ENCODE measurements at regions of chr12 and their contacts with region 1.

Region 1: DNA sequence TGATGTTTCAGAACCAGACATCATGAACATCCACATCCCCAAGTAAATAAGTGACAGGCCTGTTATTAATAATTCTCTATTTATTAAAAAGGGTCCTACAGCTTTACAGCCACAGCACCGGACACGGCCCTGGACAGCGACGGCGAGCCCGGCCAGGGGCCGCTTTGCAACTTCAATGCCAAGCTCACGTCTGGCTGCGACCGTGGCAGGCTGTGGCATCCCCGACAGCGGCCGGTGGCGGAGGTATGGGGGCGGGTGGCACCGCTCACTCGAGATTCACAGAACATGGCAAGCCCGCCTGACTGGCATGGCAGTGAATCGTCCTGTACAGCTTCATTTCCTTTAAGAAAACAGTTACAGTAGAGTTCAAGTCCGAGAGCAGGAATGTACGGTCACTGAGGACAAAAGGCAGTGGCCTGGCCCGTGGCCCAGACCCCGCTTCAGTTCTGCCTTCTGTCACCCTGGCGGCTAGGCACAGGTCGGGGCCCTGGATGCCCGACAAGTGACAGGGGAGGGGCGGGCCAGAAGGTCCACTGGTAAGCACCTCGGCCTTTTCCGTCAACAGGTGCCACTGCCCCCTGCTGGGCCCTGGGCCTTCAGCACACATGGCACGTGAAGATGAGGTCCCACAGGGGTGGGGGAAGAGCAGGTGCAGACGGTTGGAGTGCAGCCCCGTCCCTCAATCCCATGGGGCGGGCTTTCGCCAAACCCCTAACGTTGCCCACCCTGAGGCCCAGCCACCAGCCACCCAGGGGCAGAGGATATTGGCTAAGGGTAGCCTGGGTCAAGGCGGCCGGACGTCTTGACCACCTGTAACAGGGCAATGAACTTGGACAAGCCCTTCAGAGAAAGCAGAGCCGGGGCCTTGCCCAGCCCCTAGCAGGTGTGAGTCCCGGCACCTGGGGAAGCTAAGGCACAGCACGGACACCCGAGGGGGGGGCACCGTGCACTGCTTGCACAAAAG is 30.3 kb downstream of the HIP1R start:
- DNase-seq: no peak
- H3K4me3 ChIP-seq: no peak overlapping the region
- H3K27ac ChIP-seq: no peak overlapping the region
- H3K4me1 ChIP-seq: no peaks in the 10 kb centered on the region
- H3K27me3 ChIP-seq: peaks cover 16 to 34% (median 29%) of the 10 kb centered on the region in 4 experiments
- CTCF ChIP-seq: peak; percentile 17 to 42 (median 42); a peak in 3 of 4 replicates
- EP300 ChIP-seq: no peak
- POLR2A ChIP-seq: no peak
- RAD21 ChIP-seq: peak; percentile 9 to 11; a peak in 2 of 4 replicates

Region 2: DNA sequence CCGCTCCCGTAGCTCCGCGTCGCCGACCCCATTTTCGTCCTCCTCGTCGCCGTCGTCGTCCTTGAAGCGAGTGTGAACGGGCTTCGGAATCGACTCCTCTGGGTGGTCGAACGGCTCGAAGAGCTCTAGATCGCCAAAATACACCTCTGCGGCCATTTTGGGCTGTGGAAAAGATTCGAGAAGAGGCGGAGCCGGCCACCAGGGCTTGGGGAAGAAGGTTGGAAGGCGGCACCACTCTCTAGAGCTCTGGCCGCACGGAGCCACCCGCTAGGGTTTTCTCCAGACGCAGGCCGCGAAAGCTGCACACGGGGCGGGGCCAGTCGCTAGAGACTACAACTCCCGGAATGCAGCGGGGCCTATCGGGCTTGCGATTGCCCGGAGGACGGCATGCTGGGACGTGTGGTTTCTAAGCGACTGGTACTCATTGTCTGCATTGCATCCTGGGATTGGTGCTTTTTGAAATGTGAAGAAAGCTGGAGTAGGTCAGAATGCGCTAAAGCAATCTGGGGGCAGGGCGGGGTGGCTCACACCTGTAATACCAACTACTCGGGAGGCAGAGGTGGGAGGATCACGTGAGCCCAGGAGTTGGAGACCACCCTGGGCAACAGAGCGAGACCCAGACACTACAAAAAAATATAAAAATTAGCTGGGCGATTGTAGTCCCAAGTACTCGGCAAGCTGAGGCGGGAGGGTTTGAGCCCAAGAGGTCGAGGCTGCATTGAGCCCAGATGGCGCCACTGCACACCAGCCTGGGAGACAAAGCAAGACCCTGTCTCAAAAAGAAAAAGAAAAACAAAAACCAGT is 364.7 kb before region 1 on chr12 and contains the start of gene ZCCHC8:
- CTCF ChIA-PET with region 1: no interaction called
- POLR2A ChIA-PET with region 1: no interaction called
- DNase-seq: peak; percentile 94 to 95
- H3K4me3 ChIP-seq: peak within 1 kb of the TSS; percentile 77 to 96 (median 94)
- H3K27ac ChIP-seq: peak within 1 kb of the TSS; percentile 90
- H3K4me1 ChIP-seq: peaks cover 0 to 3% (median 0%) of the 10 kb centered on the region in 4 experiments; a peak in 1 of 7 replicates
- H3K27me3 ChIP-seq: no peaks in the 10 kb centered on the region
- CTCF ChIP-seq: peak; percentile 5 to 24 (median 19); a peak in 2 of 4 replicates
- EP300 ChIP-seq: peak in 1 of 2 experiments; percentile 4; a peak in 1 of 3 replicates
- POLR2A ChIP-seq: peak; percentile 81 to 85
- RAD21 ChIP-seq: no peak
- total RNA-seq, gene ZCCHC8: 27.4 and 28.9 TPM in 2 replicates

Region 3: DNA sequence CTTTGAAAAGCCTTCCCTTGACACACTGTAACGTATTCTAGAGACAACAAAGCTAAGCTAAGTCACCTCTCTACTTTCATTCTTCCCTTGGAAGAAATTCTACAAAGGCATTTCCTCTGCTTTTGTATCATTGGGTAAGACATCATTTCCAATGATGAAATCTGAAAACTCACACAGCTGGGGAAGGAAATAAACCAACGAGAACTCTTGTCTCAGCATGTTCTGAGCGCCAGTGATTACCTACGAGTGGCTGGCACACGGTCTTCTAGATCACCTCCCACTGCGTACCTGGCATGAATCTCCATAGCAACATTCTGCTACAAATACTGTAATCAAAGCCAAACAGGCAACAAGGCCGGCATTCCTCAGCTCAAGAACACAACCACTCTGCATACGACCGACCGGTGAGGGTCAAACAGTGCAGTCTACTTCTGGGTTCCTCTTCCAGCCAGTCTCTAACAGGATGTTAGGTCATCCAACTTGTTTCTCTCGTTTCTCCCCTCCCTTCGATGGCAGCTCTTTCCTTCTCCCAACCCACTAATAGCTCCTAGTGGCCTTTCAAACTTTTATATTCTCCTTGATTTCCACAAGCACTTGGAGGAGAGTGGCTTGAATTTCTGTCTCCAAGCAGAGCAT is 22.8 kb after region 1 on chr12:
- CTCF ChIA-PET with region 1: interaction called, 36 read pairs
- POLR2A ChIA-PET with region 1: interaction called, 3 read pairs
- DNase-seq: no peak
- H3K4me3 ChIP-seq: no peak overlapping the region; a peak in 1 of 8 replicates
- H3K27ac ChIP-seq: peak overlapping the region; percentile 11; the same call in 1 of the 2 replicates
- H3K4me1 ChIP-seq: peaks cover 5 to 21% (median 14%) of the 10 kb centered on the region in 4 experiments
- H3K27me3 ChIP-seq: peaks cover 0 to 3% (median 0%) of the 10 kb centered on the region in 4 experiments; a peak in 3 of 7 replicates
- CTCF ChIP-seq: no peak
- EP300 ChIP-seq: 0 out of 3 replicates have a peak, but pooled peaks of 1 of the 2 experiments have one; percentile 52
- POLR2A ChIP-seq: 0 out of 3 replicates have a peak, but pooled peaks of 1 of the 2 experiments have one; percentile 27
- RAD21 ChIP-seq: no peak